ENCODE measurements at regions of chr6 and their contacts with region 1.

Region 1: GRCh38 chr6:41334482-41335040 is 847 bp upstream of the NCR2 start:
- DNase-seq: no peak
- H3K4me3 ChIP-seq: no peak overlapping the region
- H3K27ac ChIP-seq: no peak overlapping the region
- H3K4me1 ChIP-seq: no peaks in the 10 kb centered on the region
- H3K27me3 ChIP-seq: no peaks in the 10 kb centered on the region
- CTCF ChIP-seq: no peak
- POLR2A ChIP-seq: no peak

Region 2: GRCh38 chr6:40832691-40833090 is 501.9 kb before region 1 on chr6:
- intact Hi-C with region 1: loop called (anchors 10 kb)
- DNase-seq: no peak
- H3K4me3 ChIP-seq: no peak overlapping the region
- H3K27ac ChIP-seq: no peak overlapping the region
- H3K4me1 ChIP-seq: no peaks in the 10 kb centered on the region
- H3K27me3 ChIP-seq: peaks cover 0 to 3% of the 10 kb centered on the region in 2 donors
- CTCF ChIP-seq: no peak
- POLR2A ChIP-seq: no peak

Region 3: DNA sequence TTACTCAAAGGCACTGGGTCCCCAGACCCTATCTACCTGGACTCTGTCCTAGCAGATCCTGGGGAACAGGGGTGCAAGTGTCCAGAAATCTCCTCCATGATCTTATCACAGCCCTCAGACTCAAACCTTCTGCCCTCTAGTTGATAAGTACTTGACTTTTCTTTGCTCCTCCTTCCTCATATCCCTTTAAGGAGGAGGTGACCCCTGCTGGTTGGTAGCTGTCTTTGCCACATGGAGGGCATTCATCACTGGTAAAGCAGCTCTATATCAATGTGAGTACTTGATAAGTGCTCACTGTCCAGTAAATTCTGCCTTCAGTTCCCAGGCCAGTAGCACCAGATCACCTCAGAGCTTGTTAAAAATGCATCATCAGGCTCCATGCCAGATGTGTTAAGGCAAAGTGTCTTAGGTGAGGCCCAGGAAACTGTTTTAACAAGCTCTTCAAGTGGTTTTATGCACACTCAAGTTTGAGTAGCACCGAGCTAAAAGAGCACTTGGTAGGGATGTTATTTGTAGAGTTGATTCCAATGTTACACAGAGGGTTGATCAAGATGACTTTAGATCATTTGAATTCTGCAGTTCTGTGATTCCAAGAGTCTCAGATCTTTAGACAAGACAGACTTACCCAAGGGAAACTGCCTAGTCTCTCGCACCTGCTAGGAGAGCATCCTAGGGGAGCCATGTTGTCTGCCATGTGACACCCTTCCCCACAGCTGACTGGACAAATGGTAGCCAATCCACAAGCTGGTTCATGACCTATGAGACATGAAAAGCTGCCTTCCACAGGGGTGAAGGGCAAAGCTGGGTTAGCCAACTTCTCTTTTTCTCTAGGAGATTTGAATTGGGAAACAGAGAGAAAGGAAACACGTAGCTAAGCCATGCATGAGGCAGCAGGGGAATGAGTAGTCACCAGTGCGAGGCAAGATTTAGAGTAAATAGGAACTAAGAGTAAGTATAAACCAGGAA is 152.2 kb before region 1 on chr6:
- intact Hi-C with region 1: no loop called
- DNase-seq: no peak
- H3K4me3 ChIP-seq: no peak overlapping the region
- H3K27ac ChIP-seq: no peak overlapping the region
- H3K4me1 ChIP-seq: no peaks in the 10 kb centered on the region
- H3K27me3 ChIP-seq: no peaks in the 10 kb centered on the region
- CTCF ChIP-seq: peak in 2 of 3 donors; percentile 33 to 49
- POLR2A ChIP-seq: no peak

Region 4: GRCh38 chr6:41298785-41299502 is 35.6 kb before region 1 on chr6:
- intact Hi-C with region 1: loop called (anchors 1 kb)
- DNase-seq: no peak
- H3K4me3 ChIP-seq: no peak overlapping the region
- H3K27ac ChIP-seq: no peak overlapping the region
- H3K4me1 ChIP-seq: no peaks in the 10 kb centered on the region
- H3K27me3 ChIP-seq: no peaks in the 10 kb centered on the region
- CTCF ChIP-seq: no peak
- POLR2A ChIP-seq: no peak

Measured in breast epithelium (tissue), 4 donors.